ENCODE measurements at regions of chr13 and their contacts with region 1.

Region 1: GRCh38 chr13:27362064-27362883 is 62.1 kb upstream of the GTF3A start:
- DNase-seq: peak; percentile 81
- H3K4me3 Mint-ChIP-seq: no peak overlapping the region
- H3K27ac Mint-ChIP-seq: no peak overlapping the region
- H3K4me1 Mint-ChIP-seq: peaks cover 5% of the 10 kb centered on the region
- H3K27me3 Mint-ChIP-seq: peaks cover 37% of the 10 kb centered on the region

Region 2: GRCh38 chr13:26946684-26947343 is 415.5 kb before region 1 on chr13:
- CTCF ChIA-PET with region 1: interaction called, 16 read pairs
- POLR2A ChIA-PET with region 1: no interaction called
- DNase-seq: no peak
- H3K4me3 Mint-ChIP-seq: no peak overlapping the region
- H3K27ac Mint-ChIP-seq: no peak overlapping the region
- H3K4me1 Mint-ChIP-seq: no peaks in the 10 kb centered on the region
- H3K27me3 Mint-ChIP-seq: peaks cover 15% of the 10 kb centered on the region

Region 3: DNA sequence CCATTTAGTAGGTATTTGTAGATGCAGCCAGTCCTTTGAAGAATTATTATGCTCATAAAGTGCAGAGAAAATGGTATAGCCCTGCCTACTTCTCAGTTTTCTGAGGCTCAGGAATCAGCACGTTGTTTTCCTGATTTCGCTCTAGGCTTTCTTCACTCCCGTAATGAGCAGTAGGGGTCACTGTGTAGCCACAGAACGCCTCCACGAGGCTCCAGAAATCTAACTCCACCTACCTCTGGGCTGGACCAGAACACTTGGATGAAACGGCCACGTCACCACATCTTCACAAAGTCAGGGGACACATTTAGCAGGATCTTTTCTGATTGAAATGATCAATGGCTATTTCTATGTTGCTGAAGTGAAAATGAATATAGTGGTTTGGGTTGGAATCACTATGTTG is 12.4 kb after region 1 on chr13:
- CTCF ChIA-PET with region 1: interaction called, 40 read pairs
- POLR2A ChIA-PET with region 1: interaction called, 3 read pairs
- DNase-seq: peak; percentile 63
- H3K4me3 Mint-ChIP-seq: no peak overlapping the region
- H3K27ac Mint-ChIP-seq: no peak overlapping the region
- H3K4me1 Mint-ChIP-seq: peaks cover 8% of the 10 kb centered on the region
- H3K27me3 Mint-ChIP-seq: peaks cover 19% of the 10 kb centered on the region